Activated naive CD4-positive, alpha-beta T cell treated with anti-CD3 and anti-CD28 coated beads, Interleukin-2, amount 10 ng/mL, durations not matched to agents 7 days and 5 days (primary cell): ENCODE measurements at regions of chr5 and their contacts with region 1.

Region 1: DNA sequence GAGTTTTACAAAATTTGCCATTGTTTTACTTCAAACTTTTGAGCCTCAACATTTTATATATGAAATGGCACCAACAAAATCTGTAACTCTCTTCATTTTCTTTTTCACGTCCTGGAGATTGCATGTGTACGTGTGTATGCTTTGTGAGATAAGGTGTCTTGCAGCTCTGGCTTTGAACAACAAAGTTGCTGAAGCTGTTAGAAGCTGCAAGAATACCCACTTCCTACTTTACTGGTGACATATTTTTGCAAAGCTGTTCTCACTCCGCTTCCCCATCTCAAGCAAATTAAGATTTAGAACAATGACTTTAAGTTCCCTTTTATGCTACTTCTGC is 41.8 kb downstream of the FYB1 start:
- DNase-seq: no peak
- H3K4me3 Mint-ChIP-seq: peak overlapping the region; percentile 69
- H3K27ac Mint-ChIP-seq: peak overlapping the region; percentile 95
- H3K4me1 Mint-ChIP-seq: peaks cover 97% of the 10 kb centered on the region
- H3K27me3 Mint-ChIP-seq: no peaks in the 10 kb centered on the region

Region 2: GRCh38 chr5:38692346-38692745 is 485.3 kb before region 1 on chr5:
- CTCF ChIA-PET with region 1: no interaction called
- DNase-seq: no peak
- H3K4me3 Mint-ChIP-seq: no peak overlapping the region
- H3K27ac Mint-ChIP-seq: no peak overlapping the region
- H3K4me1 Mint-ChIP-seq: no peaks in the 10 kb centered on the region
- H3K27me3 Mint-ChIP-seq: peaks cover 4% of the 10 kb centered on the region

Region 3: GRCh38 chr5:38994324-38994927 is 183.2 kb before region 1 on chr5:
- CTCF ChIA-PET with region 1: no interaction called
- DNase-seq: peak; percentile 52
- H3K4me3 Mint-ChIP-seq: no peak overlapping the region
- H3K27ac Mint-ChIP-seq: no peak overlapping the region
- H3K4me1 Mint-ChIP-seq: peaks cover 4% of the 10 kb centered on the region
- H3K27me3 Mint-ChIP-seq: no peaks in the 10 kb centered on the region

Region 4: GRCh38 chr5:39164529-39165402 is 12.8 kb before region 1 on chr5:
- CTCF ChIA-PET with region 1: interaction called, 18 read pairs
- DNase-seq: no peak
- H3K4me3 Mint-ChIP-seq: peak overlapping the region; percentile 52
- H3K27ac Mint-ChIP-seq: peak overlapping the region; percentile 91
- H3K4me1 Mint-ChIP-seq: peaks cover 86% of the 10 kb centered on the region
- H3K27me3 Mint-ChIP-seq: no peaks in the 10 kb centered on the region

Region 5: DNA sequence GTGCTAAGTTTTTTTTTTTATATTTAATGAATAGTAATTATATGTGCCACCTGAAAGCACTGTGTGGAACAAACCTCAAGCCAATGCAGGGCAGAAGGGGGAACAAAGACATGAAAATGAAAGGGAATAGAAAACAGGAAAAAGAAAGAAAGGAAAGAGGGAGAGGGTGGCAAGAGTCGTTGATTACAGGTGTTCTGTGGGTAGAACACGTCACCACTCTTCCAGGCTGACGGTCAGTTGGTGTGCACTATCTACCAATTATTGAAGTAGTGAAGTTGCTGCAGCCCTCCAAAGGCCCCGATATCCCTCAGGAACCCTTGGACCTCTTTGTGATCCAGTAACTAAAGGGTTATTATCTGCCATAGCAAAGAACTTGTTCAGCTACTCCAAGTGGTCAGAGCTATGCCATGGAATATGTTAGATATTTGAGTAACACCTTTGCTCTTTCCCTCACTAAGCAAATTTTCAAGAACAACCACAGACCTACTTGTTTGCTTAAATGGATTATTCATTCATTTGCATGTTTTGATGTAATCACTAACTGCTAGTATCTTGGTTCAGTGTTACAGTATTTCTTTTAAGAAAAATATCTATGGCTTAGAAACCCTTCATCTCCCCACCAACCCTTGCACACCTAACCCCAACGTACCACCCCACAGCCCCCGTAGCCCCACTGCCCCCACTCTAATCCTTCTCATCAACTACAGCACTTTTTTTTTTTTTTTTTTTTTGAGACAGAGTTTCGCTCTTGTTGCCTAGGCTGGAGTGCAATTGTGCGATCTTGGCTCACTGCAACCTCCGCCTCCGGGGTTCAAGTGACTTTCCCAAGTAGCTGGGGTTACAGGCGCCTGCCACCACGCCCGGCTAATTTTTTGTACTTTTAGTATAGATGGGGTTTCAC is 10.5 kb after region 1 on chr5:
- CTCF ChIA-PET with region 1: interaction called, 23 read pairs
- DNase-seq: peak; percentile 42
- H3K4me3 Mint-ChIP-seq: peak overlapping the region; percentile 62
- H3K27ac Mint-ChIP-seq: peak overlapping the region; percentile 91
- H3K4me1 Mint-ChIP-seq: peaks cover 89% of the 10 kb centered on the region
- H3K27me3 Mint-ChIP-seq: no peaks in the 10 kb centered on the region

Region 6: GRCh38 chr5:39194466-39195136 is 17.0 kb after region 1 on chr5:
- CTCF ChIA-PET with region 1: interaction called, 23 read pairs
- DNase-seq: peak; percentile 35
- H3K4me3 Mint-ChIP-seq: peak overlapping the region; percentile 72
- H3K27ac Mint-ChIP-seq: peak overlapping the region; percentile 86
- H3K4me1 Mint-ChIP-seq: peaks cover 76% of the 10 kb centered on the region
- H3K27me3 Mint-ChIP-seq: no peaks in the 10 kb centered on the region

Region 7: GRCh38 chr5:39202597-39203274 is 25.1 kb after region 1 on chr5:
- CTCF ChIA-PET with region 1: interaction called, 13 read pairs
- DNase-seq: peak; percentile 66
- H3K4me3 Mint-ChIP-seq: peak overlapping the region; percentile 88
- H3K27ac Mint-ChIP-seq: peak overlapping the region; percentile 94
- H3K4me1 Mint-ChIP-seq: peaks cover 41% of the 10 kb centered on the region
- H3K27me3 Mint-ChIP-seq: no peaks in the 10 kb centered on the region

Region 8: DNA sequence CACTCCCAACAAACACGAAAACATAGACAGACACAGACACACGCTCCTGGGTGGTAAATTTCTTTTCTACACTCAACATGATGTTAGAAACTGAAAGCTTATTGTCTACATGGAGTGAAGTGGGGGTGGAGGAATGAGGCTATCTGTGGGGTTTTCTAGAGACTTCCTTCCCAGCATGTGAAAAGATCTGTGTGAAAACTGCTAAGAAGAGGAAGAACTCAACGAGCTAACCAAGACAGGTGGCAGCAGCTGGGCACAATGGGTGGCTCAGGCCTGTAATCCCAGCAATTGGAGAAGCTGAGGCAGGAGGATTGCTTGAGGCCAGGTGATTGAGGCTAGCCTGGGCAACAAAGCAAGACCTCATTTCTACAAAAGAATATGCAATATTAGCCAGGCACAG is 34.2 kb after region 1 on chr5:
- CTCF ChIA-PET with region 1: interaction called, 45 read pairs
- DNase-seq: peak; percentile 48
- H3K4me3 Mint-ChIP-seq: peak overlapping the region; percentile 52
- H3K27ac Mint-ChIP-seq: peak overlapping the region; percentile 92
- H3K4me1 Mint-ChIP-seq: peaks cover 94% of the 10 kb centered on the region
- H3K27me3 Mint-ChIP-seq: no peaks in the 10 kb centered on the region

Region 9: GRCh38 chr5:39256477-39257235 is 79.1 kb after region 1 on chr5:
- CTCF ChIA-PET with region 1: no interaction called
- DNase-seq: no peak
- H3K4me3 Mint-ChIP-seq: no peak overlapping the region
- H3K27ac Mint-ChIP-seq: no peak overlapping the region
- H3K4me1 Mint-ChIP-seq: peaks cover 8% of the 10 kb centered on the region
- H3K27me3 Mint-ChIP-seq: no peaks in the 10 kb centered on the region